Heart left ventricle (tissue), 16 donors: ENCODE measurements at regions of chr10 and their contacts with region 1.

Region 1: GRCh38 chr10:119416855-119417254 is 125.7 kb downstream of the RGS10 start:
- DNase-seq: peak; percentile 68 to 81 (median 76)
- ATAC-seq: peak in 3 of 4 donors; percentile 28 to 48 (median 34)
- H3K4me3 ChIP-seq: no peak overlapping the region
- H3K27ac ChIP-seq: peak overlapping the region in 7 of 12 donors; percentile 1 to 89 (median 78)
- H3K4me1 ChIP-seq: peaks cover 3 to 78% (median 51%) of the 10 kb centered on the region in 12 donors
- H3K27me3 ChIP-seq: no peaks in the 10 kb centered on the region
- CTCF ChIP-seq: peak; percentile 60 to 87 (median 76)
- POLR2A ChIP-seq: no peak

Region 2: GRCh38 chr10:119199231-119199992 is 217.4 kb before region 1 on chr10:
- intact Hi-C with region 1: loop called in 4 of 10 experiments (anchors 2 to 10 kb)
- DNase-seq: peak in 4 of 5 donors; percentile 68 to 76 (median 72)
- ATAC-seq: peak; percentile 82 to 98 (median 97)
- H3K4me3 ChIP-seq: no peak overlapping the region
- H3K27ac ChIP-seq: no peak overlapping the region
- H3K4me1 ChIP-seq: peaks cover 0 to 9% (median 1%) of the 10 kb centered on the region in 12 donors
- H3K27me3 ChIP-seq: no peaks in the 10 kb centered on the region
- CTCF ChIP-seq: peak; percentile 63 to 92 (median 84)
- POLR2A ChIP-seq: no peak

Region 3: GRCh38 chr10:119270762-119271366 is 146.0 kb before region 1 on chr10:
- intact Hi-C with region 1: loop called in 3 of 10 experiments (anchors 5 to 10 kb)
- DNase-seq: peak; percentile 88 to 95 (median 90)
- ATAC-seq: peak; percentile 89 to 95 (median 90)
- H3K4me3 ChIP-seq: peak overlapping the region in 7 of 12 donors; percentile 5 to 25 (median 19)
- H3K27ac ChIP-seq: peak overlapping the region; percentile 28 to 86 (median 78)
- H3K4me1 ChIP-seq: peaks cover 23 to 96% (median 71%) of the 10 kb centered on the region in 12 donors
- H3K27me3 ChIP-seq: no peaks in the 10 kb centered on the region
- CTCF ChIP-seq: peak in 1 of 12 donors; percentile 7
- POLR2A ChIP-seq: no peak

Region 4: GRCh38 chr10:119281581-119282071 is 135.2 kb before region 1 on chr10:
- intact Hi-C with region 1: loop called in 3 of 10 experiments (anchors 5 to 10 kb)
- DNase-seq: peak; percentile 85 to 93 (median 91)
- ATAC-seq: peak; percentile 59 to 75 (median 66)
- H3K4me3 ChIP-seq: no peak overlapping the region
- H3K27ac ChIP-seq: peak overlapping the region in 10 of 12 donors; percentile 14 to 79 (median 58)
- H3K4me1 ChIP-seq: peaks cover 17 to 97% (median 78%) of the 10 kb centered on the region in 12 donors
- H3K27me3 ChIP-seq: no peaks in the 10 kb centered on the region
- CTCF ChIP-seq: no peak
- POLR2A ChIP-seq: no peak

Region 5: DNA sequence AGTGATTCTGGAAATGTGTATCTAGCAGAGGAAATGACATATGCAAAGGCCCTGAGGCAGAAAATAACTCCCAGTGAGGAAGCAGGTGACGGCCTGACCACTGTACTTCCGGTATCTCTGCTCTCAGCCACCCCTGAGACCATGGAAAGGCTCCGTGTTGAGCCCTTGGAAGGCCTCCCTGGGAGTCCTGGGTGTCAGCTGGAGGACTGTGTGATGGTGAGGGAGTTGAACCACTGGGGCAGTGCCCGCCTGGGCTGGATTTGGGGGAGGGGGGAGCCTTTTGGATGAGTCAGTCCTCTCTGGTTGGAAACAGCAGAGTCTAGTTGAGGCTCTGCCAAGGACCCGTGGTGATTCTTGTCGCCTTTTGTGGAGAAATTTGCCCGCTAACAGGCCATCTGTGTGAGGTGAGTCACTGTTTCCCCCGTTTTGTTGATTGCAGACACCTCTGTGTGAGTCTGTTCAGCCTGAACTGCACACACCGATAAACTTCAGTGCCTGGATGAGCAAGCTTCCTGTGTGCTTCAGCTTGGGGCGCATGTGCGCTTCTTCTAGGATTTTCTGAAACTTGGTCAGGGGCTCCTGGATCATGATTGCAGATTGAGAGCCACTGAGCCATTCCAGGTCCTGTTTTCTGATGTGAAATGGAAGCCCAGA is 110.9 kb before region 1 on chr10:
- intact Hi-C with region 1: loop called in 1 of 10 experiments (anchors 10 kb)
- DNase-seq: peak; percentile 42 to 77 (median 51)
- ATAC-seq: peak; percentile 19 to 78 (median 73)
- H3K4me3 ChIP-seq: peak overlapping the region in 2 of 12 donors; percentile 13 to 35
- H3K27ac ChIP-seq: peak overlapping the region in 10 of 12 donors; percentile 12 to 89 (median 49)
- H3K4me1 ChIP-seq: peaks cover 0 to 88% (median 61%) of the 10 kb centered on the region in 12 donors
- H3K27me3 ChIP-seq: no peaks in the 10 kb centered on the region
- CTCF ChIP-seq: no peak
- POLR2A ChIP-seq: no peak

Region 6: DNA sequence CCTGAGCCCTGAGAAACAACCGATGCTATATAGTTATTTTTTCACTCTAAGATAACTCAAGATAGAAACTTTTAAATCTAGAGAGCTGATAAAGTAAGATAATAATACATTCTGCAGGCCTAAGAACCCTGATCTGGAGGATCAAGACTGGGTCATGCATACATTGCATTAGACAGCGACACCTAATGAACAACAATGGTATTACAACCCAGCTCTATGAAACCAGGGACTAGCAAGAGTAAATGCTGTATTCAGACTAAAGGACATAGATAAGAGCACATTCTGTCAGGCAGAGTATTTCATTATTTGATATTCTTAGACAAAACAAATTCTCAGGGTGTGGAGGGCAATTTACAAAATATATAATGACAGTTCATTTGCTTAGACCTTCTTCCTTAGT is 60.9 kb before region 1 on chr10:
- intact Hi-C with region 1: loop called in 2 of 10 experiments (anchors 5 to 10 kb)
- DNase-seq: no peak
- ATAC-seq: no peak
- H3K4me3 ChIP-seq: no peak overlapping the region
- H3K27ac ChIP-seq: no peak overlapping the region
- H3K4me1 ChIP-seq: peaks cover 0 to 47% (median 32%) of the 10 kb centered on the region in 12 donors
- H3K27me3 ChIP-seq: no peaks in the 10 kb centered on the region
- CTCF ChIP-seq: peak in 9 of 12 donors; percentile 7 to 39 (median 27)
- POLR2A ChIP-seq: no peak

Region 7: DNA sequence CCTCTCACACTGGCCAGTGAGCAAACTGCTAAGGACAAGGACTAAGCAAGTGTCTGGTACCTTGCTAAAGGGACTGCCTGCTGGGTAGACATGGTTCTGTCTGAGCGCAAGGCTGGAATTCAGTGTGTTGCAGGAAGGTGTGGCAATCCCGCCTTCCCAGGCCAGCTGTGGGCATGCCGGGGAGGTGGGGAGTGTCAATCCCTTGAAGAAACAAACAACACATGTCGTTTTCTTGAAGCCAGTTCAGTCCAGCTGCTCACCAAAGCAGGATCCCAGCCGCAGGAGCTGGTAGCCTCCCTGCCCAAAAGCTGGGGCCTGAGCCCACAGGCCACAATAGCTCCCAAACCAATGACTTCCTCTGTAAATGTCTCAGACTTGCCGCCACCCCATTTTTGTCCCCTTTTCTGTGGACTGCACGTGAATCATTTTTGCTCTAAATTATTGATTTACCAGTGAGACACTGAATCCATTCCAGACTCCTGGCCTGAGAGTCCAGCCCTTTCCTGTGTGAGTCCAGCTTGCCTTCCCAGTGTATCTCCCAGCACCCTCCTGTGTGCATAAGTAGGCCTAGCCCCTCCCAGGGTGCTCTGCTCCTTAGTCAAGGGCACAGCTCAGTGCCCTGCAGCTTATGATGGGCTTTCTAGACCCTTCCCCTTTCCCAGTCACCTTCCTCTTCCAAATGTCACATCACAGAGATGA is 41.1 kb before region 1 on chr10:
- intact Hi-C with region 1: loop called in 1 of 10 experiments (anchors 5 kb)
- DNase-seq: peak in 3 of 5 donors; percentile 59 to 68 (median 66)
- ATAC-seq: peak in 2 of 4 donors; percentile 3 to 28
- H3K4me3 ChIP-seq: no peak overlapping the region
- H3K27ac ChIP-seq: peak overlapping the region in 11 of 12 donors; percentile 7 to 79 (median 57)
- H3K4me1 ChIP-seq: peaks cover 4 to 91% (median 48%) of the 10 kb centered on the region in 12 donors
- H3K27me3 ChIP-seq: no peaks in the 10 kb centered on the region
- CTCF ChIP-seq: no peak
- POLR2A ChIP-seq: no peak